A673 (cell line): ENCODE measurements at regions of chr9 and their contacts with region 1.

Region 1: DNA sequence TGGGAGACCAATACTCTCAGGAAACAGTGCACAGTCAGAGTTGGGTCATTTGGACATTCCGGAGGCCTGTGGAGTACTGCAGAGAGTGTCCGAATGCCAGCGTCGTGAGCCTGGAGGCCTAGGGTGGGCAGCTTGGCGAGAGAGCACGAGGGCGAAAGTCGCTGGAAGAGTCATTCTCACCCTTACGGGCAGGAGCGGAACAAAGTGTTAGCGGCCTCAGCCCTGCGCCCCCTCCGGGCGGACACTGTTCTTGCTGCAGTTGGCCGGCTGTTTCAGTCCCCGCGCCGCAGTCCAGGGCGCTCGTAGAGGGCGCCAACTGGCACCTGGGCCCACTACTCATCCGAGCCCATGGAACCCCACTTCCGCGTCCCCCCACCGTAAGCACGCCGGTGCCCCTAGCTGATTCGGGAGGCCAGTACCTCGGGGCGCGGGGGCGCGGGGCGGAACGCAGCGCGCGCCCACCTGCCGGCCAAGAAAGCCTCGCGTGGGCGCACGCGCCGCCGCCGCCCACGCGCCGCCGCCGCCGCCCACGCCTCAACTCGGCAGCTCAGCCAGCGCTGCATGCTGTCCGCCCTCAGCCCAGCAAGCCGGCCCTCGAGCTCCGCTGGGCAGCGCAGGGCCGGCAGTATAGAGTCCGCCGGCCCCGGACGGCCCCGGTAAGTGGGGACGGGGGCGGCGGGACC is 99.7 kb upstream of the CCL21 start:
- DNase-seq: peak; percentile 1
- H3K4me3 ChIP-seq: no peak overlapping the region
- H3K27ac ChIP-seq: no peak overlapping the region
- H3K4me1 ChIP-seq: no peaks in the 10 kb centered on the region
- H3K27me3 ChIP-seq: peaks cover 60% of the 10 kb centered on the region
- CTCF ChIP-seq: 0 out of 2 replicates have a peak, but pooled peaks have one; percentile 33

Region 2: GRCh38 chr9:34346873-34347799 is 462.5 kb before region 1 on chr9:
- CTCF ChIA-PET with region 1: no interaction called
- POLR2A ChIA-PET with region 1: no interaction called
- intact Hi-C with region 1: no loop called
- DNase-seq: peak; percentile 49
- H3K4me3 ChIP-seq: no peak overlapping the region
- H3K27ac ChIP-seq: no peak overlapping the region
- H3K4me1 ChIP-seq: no peaks in the 10 kb centered on the region
- H3K27me3 ChIP-seq: no peaks in the 10 kb centered on the region
- CTCF ChIP-seq: no peak

Region 3: DNA sequence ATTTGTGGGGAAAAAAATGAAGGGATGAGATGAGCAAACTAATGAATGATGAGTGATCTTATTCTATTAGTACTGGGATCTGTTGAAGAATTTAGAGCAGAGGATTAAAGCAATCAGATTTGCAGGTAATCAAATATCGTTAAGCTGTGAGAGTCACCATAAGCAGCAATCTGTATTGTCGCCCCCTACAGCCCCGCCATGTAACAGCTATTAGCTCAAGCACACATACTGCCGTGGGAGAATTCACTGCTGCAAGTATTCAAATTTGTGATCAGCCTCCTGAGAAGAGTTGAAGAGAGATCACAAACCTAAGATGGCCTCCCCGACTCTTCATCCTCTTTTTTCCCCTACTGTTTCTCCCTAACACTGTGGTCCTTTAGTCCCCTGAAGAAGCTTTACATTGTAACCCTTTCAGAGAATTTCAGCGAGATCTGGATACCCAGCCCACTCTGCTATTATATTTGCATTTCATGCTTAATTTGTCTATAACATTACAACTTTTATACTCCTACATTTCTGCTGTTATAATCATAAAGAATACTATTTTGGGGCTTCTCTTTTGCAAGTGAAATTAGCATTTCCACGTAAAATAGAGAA is 120.0 kb after region 1 on chr9:
- CTCF ChIA-PET with region 1: no interaction called
- POLR2A ChIA-PET with region 1: no interaction called
- intact Hi-C with region 1: loop called (anchors 10 kb)
- DNase-seq: peak; percentile 52
- H3K4me3 ChIP-seq: no peak overlapping the region
- H3K27ac ChIP-seq: no peak overlapping the region
- H3K4me1 ChIP-seq: no peaks in the 10 kb centered on the region
- H3K27me3 ChIP-seq: no peaks in the 10 kb centered on the region
- CTCF ChIP-seq: peak; percentile 89

Region 4: DNA sequence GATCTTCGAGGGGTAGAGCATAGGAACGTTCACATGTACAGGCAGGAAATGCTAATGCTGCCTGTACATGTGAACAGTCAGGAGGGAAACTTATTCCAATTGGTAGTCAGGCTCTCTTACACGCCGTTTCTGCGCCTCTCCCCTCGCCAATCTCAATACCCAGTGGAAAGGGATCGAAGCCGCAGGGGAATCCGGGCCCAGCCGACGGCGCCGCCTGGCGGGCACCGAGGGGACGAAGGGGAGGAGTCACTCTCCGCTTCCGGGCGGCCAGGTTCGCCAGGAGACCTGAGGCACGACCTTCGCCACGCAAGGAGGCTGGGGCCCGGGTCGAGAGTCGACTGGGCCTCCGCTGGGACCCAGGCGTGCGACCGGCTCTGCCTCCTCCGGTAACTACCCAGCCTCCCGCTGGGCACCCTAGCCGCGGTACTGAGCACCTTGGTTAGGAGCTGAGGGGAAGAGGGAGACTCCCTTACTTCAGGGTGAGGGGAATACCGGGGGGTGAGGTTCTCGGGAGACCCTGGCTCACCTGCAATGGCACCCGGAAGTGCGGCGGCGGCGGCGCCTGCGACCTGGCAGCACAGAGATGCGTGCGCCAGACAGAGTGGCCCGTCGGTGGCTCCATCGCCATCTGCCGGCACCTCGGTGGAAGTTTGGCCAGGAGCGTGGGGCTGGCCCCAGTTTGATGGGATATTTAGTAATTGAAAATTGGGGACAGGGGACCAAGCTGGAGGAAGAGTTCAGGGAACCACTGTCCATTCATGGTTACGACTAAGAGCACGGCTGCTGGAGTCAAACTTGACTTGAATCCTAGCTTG is 286.6 kb after region 1 on chr9 and contains the start of gene PIGO:
- CTCF ChIA-PET with region 1: no interaction called
- POLR2A ChIA-PET with region 1: no interaction called
- intact Hi-C with region 1: no loop called
- DNase-seq: peak; percentile 90
- H3K4me3 ChIP-seq: peak within 1 kb of the TSS; percentile 96
- H3K27ac ChIP-seq: peak within 1 kb of the TSS; percentile 99
- H3K4me1 ChIP-seq: peaks cover 7% of the 10 kb centered on the region
- H3K27me3 ChIP-seq: no peaks in the 10 kb centered on the region
- CTCF ChIP-seq: peak; percentile 77
- total RNA-seq, gene PIGO: 32.9 and 34.3 TPM in 2 replicates